ENCODE measurements at regions of chr2 and their contacts with region 1.

Region 1: DNA sequence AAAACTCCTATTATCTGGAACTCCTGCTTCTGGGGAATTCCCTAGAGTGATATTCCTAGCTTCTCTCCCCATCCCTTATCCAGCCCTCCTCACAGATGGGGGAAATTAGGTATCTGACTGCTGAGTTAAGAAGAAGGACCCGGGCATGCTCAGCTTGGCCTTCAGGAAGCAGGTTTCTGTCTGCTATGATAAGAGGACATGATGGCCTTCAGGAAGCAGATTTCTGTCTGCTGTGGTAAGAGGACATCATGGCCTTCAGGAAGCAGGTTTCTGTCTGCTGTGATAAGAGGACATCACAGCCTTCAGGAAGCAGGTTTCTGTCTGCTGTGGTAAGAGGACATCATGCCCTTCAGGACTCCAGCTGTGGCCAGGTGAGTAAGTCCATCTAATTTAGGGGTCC is 65.2 kb downstream of the PLEKHM3 start:
- DNase-seq: peak; percentile 88 to 99 (median 97)
- H3K4me3 ChIP-seq: no peak overlapping the region
- H3K27ac ChIP-seq: peak overlapping the region in 1 of 2 experiments; percentile 52
- H3K4me1 ChIP-seq: peaks cover 0 to 26% (median 18%) of the 10 kb centered on the region in 4 experiments
- H3K27me3 ChIP-seq: no peaks in the 10 kb centered on the region

Region 2: DNA sequence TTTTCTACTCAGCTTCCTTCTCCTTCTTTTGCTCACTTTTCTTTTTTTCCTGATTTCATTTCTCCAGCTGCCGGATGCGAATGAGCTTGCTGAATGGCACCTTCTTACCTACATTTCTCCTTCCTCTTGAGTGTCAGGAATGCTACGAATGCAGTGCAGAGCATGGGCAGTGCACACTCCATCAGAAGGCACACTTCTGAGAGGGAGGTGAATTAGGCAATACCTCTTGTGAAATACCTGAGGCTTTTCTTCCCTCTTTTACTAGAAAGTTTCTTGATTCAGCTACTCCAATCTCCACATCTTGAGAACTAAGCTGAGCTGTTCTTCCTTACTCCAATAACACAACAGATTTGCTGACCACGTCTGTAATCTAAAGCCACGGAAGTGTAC is 14.1 kb after region 1 on chr2:
- CTCF ChIA-PET with region 1: interaction called, 18 read pairs
- POLR2A ChIA-PET with region 1: interaction called, 3 read pairs
- DNase-seq: no peak
- H3K4me3 ChIP-seq: no peak overlapping the region
- H3K27ac ChIP-seq: no peak overlapping the region
- H3K4me1 ChIP-seq: peaks cover 2 to 31% (median 15%) of the 10 kb centered on the region in 4 experiments
- H3K27me3 ChIP-seq: no peaks in the 10 kb centered on the region

Region 3: GRCh38 chr2:208092093-208092832 is 132.2 kb after region 1 on chr2:
- CTCF ChIA-PET with region 1: no interaction called
- POLR2A ChIA-PET with region 1: no interaction called
- DNase-seq: no peak
- H3K4me3 ChIP-seq: no peak overlapping the region
- H3K27ac ChIP-seq: no peak overlapping the region
- H3K4me1 ChIP-seq: peaks cover 0 to 9% (median 2%) of the 10 kb centered on the region in 4 experiments
- H3K27me3 ChIP-seq: no peaks in the 10 kb centered on the region

Region 4: GRCh38 chr2:208150956-208151355 is 190.9 kb after region 1 on chr2:
- CTCF ChIA-PET with region 1: no interaction called
- POLR2A ChIA-PET with region 1: no interaction called
- DNase-seq: peak in 2 of 3 donors; percentile 19 to 41
- H3K4me3 ChIP-seq: no peak overlapping the region
- H3K27ac ChIP-seq: no peak overlapping the region
- H3K4me1 ChIP-seq: peaks cover 0 to 4% (median 0%) of the 10 kb centered on the region in 4 experiments
- H3K27me3 ChIP-seq: no peaks in the 10 kb centered on the region